ENCODE measurements at regions of chr20 and their contacts with region 1.

Region 1: GRCh38 chr20:35741892-35742740 is at the start of gene RBM39:
- DNase-seq: peak; percentile 99 to 100
- H3K4me3 ChIP-seq: peak within 1 kb of the TSS; percentile 98
- H3K27ac ChIP-seq: peak within 1 kb of the TSS; percentile 96
- H3K4me1 ChIP-seq: peaks cover 30% of the 10 kb centered on the region
- H3K27me3 ChIP-seq: no peaks in the 10 kb centered on the region
- CTCF ChIP-seq: peak; percentile 50
- total RNA-seq, gene RBM39: 354 and 379 TPM in 2 replicates

Region 2: GRCh38 chr20:35710039-35710438 is 32.1 kb before region 1 on chr20:
- CTCF ChIA-PET with region 1: no interaction called
- POLR2A ChIA-PET with region 1: interaction called, 19 read pairs
- intact Hi-C with region 1: no loop called
- DNase-seq: no peak
- H3K4me3 ChIP-seq: no peak overlapping the region
- H3K27ac ChIP-seq: no peak overlapping the region
- H3K4me1 ChIP-seq: no peaks in the 10 kb centered on the region
- H3K27me3 ChIP-seq: no peaks in the 10 kb centered on the region
- CTCF ChIP-seq: no peak

Region 3: GRCh38 chr20:35771689-35772562 is 29.8 kb after region 1 on chr20 and contains the start of gene PHF20:
- CTCF ChIA-PET with region 1: interaction called, 9 read pairs
- POLR2A ChIA-PET with region 1: interaction called, 65 read pairs
- intact Hi-C with region 1: loop called (anchors 1 kb)
- DNase-seq: peak; percentile 77 to 98
- H3K4me3 ChIP-seq: peak within 1 kb of the TSS; percentile 87
- H3K27ac ChIP-seq: no peak within 1 kb of the TSS
- H3K4me1 ChIP-seq: peaks cover 24% of the 10 kb centered on the region
- H3K27me3 ChIP-seq: no peaks in the 10 kb centered on the region
- CTCF ChIP-seq: no peak
- total RNA-seq, gene PHF20: 59.8 and 60.2 TPM in 2 replicates

Region 4: DNA sequence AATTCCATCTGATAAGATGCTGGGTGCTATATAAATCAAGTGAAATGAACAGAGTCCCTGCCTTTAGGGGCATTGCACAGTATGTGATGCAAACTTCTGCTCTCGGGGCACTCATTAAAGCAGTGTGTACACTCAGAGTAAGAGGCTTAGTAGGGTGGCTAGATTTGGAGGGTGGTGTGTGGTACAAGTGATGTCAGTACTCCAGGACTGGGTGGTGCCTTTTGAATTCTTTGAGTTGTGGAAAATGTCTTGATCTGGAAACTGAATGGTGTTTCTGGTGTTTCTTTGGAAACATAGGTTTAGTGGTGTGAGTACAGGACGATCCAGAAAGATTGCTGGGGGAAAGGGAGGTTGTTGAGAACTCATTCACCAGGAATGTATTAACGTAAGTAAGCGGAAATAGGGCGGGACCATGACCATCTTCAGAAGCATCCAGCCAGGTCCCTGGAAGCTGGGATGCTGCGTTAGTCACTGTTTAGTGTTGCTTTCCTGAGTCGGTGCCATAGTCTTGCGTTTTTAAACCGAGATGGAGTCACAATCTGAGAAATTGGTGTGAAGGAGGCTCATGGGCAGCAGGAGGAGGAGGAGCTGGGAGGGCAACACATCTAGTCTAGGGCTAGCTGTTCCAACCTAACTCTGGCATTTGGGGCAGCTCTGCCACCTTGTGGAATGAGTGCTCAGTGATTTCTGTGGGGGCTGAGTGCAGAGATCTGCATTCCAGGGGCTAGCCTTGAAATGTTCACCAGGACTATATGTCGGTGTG is 141.8 kb after region 1 on chr20:
- CTCF ChIA-PET with region 1: interaction called, 3 read pairs
- POLR2A ChIA-PET with region 1: interaction called, 9 read pairs
- intact Hi-C with region 1: loop called (anchors 1 kb)
- DNase-seq: peak; percentile 86 to 99
- H3K4me3 ChIP-seq: peak overlapping the region; percentile 34; the same call in 1 of the 2 replicates
- H3K27ac ChIP-seq: peak overlapping the region; percentile 94
- H3K4me1 ChIP-seq: peaks cover 50% of the 10 kb centered on the region
- H3K27me3 ChIP-seq: no peaks in the 10 kb centered on the region
- CTCF ChIP-seq: peak; percentile 82

Region 5: DNA sequence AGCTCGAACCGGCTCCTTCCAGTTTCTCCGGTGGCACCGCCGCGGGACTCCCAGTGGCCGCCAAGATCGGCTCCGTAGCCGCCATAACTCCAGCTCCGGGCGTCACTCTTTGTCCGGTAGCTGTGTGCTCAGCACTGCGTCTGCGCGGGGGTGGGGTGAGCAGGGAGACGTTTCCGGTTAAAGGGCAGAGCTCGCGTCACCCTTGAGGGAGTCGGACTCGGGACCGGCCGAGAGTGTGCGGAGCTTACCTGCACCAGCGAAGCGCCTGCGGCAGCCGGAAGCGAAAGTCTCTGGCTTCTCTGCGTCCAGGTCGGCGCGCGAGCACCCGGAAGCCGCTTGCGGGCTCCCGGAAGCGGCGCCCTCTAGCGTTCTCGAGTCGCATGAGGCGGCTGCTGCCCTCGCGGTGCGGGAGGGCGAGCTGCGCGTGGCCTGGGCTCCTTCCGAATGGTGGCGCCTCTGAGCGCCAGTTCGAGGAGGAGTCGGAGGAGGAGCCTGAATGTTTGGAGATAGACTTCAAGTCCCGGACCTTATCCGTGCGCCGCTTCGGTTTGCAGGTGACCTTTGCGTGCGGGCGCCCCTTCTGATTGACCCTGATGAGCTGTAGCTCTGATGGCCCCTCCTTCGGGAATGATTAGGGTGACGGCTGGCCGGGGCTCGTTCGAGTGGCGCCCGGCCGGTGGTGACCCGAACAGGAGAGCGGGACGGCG is 212.2 kb after region 1 on chr20 and contains the start of gene SCAND1:
- CTCF ChIA-PET with region 1: interaction called, 10 read pairs
- POLR2A ChIA-PET with region 1: interaction called, 46 read pairs
- intact Hi-C with region 1: loop called (anchors 1 kb)
- DNase-seq: peak; percentile 96 to 99
- H3K4me3 ChIP-seq: peak within 1 kb of the TSS; percentile 99
- H3K27ac ChIP-seq: peak within 1 kb of the TSS; percentile 98
- H3K4me1 ChIP-seq: peaks cover 28% of the 10 kb centered on the region
- H3K27me3 ChIP-seq: no peaks in the 10 kb centered on the region
- CTCF ChIP-seq: peak; percentile 85
- total RNA-seq, gene SCAND1: 56.6 and 95.0 TPM in 2 replicates